Esophagus muscularis mucosa (tissue), 4 donors: ENCODE measurements at regions of chr11 and their contacts with region 1.

Region 1: DNA sequence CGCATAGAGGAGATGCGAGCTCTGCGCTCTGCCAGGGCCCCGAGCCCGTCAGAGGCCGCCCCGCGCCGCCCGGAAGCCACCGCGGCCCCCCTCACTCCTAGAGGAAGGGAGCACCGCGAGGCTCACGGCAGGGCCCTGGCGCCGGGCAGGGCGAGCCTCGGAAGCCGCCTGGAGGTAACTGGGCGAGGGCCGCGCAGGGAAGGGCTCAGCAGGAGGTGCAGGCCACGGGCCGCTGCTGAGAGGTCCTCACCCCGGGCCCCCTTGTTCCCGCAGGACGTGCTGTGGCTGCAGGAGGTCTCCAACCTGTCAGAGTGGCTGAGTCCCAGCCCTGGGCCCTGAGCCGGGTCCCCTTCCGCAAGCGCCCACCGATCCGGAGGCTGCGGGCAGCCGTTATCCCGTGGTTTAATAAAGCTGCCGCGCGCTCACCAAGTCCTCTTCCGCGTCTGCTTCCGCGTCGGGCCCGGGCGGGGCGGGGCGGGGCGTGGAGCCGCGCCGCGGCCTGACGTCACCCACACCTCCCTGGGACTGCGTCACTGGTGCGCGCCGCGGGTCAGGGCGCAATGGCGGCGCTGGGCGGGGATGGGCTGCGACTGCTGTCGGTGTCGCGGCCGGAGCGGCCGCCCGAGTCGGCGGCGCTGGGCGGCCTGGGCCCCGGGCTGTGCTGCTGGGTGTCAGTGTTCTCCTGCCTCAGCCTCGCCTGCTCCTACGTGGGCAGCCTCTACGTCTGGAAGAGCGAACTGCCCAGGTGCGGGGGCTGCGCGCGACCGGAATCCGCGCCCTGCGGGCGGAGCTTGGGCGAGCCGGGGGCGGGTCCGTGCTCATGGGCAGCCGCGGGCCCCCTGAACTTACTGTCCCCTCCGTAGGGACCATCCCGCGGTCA is at the start of gene RCE1:
- DNase-seq: peak; percentile 97
- H3K4me3 ChIP-seq: peak within 1 kb of the TSS; percentile 97 to 100 (median 98)
- H3K27ac ChIP-seq: peak within 1 kb of the TSS; percentile 95 to 100 (median 99)
- H3K4me1 ChIP-seq: peaks cover 25 to 43% (median 40%) of the 10 kb centered on the region in 4 donors
- H3K27me3 ChIP-seq: no peaks in the 10 kb centered on the region
- CTCF ChIP-seq: peak in 1 of 3 experiments; percentile 20
- EP300 ChIP-seq: no peak
- POLR2A ChIP-seq: peak; percentile 71
- total RNA-seq, gene RCE1: 8.7 to 18.2 (median 13.0) TPM

Region 2: DNA sequence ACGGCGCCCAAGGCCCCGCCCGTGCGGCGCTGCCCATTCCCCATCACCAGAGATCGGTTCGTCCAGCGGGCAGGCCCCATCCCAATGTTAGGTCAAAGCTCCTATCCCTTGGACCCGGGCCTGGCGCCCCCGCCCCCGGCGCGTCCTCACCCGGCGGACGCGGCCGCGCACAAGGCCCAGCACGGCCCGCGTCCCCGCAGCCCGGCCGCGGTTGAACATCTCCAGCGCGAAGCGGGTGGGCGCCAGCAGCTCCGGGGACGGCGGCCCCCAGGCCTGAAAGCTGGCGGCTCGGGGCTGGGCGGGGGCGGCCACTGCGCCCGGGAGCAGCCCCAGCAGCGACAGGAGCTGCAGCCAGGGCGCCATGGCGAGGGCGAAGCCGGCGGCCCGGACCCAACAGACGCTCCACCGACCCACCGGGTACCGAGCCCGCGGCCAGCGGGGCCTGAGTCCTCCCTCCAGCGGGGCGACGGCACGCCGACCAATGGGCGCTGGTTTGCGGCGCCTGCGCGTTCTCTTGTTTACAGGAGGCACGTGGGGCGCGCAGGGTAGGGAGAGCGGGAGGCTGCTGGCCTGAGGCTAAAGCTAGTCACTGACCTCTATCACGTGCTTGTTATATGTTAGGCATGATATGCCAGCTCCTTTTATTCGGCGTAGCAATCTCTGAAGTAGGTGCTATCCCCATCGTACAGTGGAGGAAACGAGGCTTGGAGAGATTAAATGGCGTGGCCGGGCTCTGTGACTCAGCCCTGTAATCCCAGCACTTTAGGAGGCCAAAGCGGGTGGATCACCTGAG is 274.8 kb before region 1 on chr11 and contains the start of gene CTSF:
- intact Hi-C with region 1: loop called (anchors 10 kb)
- DNase-seq: no peak
- H3K4me3 ChIP-seq: peak within 1 kb of the TSS; percentile 71 to 82 (median 77)
- H3K27ac ChIP-seq: peak within 1 kb of the TSS; percentile 50 to 70 (median 67)
- H3K4me1 ChIP-seq: peaks cover 10 to 23% (median 21%) of the 10 kb centered on the region in 4 donors
- H3K27me3 ChIP-seq: no peaks in the 10 kb centered on the region
- CTCF ChIP-seq: peak in 1 of 3 experiments; percentile 26
- EP300 ChIP-seq: no peak
- POLR2A ChIP-seq: no peak
- total RNA-seq, gene CTSF: 73.1 to 112 (median 96.6) TPM

Region 3: DNA sequence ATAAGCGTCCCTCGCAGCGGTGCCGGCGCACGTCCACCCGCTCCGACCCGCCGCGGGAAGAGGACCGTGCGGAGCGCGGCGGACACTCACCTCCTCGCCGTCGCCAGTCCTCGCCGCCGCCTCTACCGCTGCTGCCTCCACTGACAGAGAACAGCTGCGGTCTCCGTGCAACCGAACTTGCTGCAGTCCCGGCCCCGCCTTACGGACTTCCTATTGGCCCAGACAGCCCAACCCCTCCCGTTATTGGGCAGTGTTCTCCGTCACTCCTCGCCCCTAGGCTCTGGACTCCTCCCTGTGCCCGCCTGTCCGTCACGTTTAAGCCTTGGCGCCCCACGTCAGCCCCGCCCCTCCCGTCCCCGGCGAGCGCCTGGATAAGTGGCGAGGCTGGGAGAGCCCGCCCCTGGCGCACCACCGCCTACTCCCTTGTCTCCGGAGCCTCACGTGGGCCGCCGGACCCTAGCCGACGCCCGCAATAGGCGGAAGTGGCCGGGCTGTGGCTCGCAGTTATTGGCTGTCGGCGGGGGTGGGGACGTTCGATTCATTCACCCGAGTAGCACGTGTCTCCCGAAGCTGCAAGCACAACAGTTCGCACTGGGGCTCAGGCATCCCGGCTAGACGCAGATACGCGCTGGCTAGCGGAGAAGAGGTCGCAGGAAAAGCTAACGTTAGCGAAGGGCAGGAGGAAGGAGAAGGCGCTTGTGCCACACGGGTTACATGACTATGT is 115.3 kb after region 1 on chr11 and contains the start of gene PC:
- intact Hi-C with region 1: loop called (anchors 10 kb)
- DNase-seq: peak; percentile 100
- H3K4me3 ChIP-seq: peak within 1 kb of the TSS; percentile 71 to 82 (median 78)
- H3K27ac ChIP-seq: peak within 1 kb of the TSS; percentile 73 to 91 (median 80)
- H3K4me1 ChIP-seq: peaks cover 16 to 24% (median 19%) of the 10 kb centered on the region in 4 donors
- H3K27me3 ChIP-seq: no peaks in the 10 kb centered on the region
- CTCF ChIP-seq: peak in 1 of 3 experiments; percentile 16
- EP300 ChIP-seq: no peak
- POLR2A ChIP-seq: peak; percentile 64
- total RNA-seq, gene PC: 2.1 to 5.5 (median 5.1) TPM